B cell (primary cell): ENCODE measurements at regions of chr11 and their contacts with region 1.

Region 1: DNA sequence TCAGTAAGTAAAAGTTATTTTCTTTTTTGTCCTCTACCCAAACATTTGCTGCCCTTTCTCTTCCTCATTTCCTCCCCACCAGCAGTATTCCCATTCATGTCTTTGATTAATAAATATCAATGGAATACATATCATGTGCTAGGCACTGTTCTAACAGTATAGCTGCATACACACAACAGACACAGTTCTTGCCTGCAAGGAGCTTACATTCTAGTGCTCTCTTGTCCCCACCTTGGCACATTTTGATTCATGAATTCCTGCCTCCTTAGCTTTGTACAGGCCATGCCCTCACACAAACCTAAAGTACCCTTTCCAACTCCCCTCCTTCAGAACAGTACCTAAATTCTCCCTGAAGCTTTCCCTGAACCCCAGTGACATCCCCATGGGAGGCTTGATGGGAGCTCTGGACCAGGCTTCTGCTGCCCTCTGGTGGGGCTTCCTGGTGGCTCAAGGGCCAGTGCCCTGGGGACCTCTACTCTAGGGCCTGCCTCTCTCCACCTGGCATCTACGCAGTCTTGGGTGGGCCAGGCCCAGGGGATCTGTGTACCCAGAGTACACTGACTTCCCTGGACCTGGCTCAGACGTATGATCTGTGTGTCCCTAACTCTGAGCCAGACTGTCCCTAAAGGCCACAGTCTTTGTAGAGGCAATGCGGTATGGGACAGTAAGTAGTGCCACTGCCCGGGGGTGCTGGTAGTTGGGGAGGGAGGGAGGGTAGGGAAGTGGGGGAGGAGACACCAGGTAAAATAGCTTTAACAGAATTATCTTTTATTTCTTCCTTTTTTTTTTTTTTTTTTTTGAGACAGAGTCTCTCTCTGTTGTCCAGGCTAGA is 14.1 kb downstream of the RPS13 start:
- DNase-seq: peak; percentile 48
- ATAC-seq: peak; percentile 57
- H3K4me3 ChIP-seq: no peak overlapping the region
- H3K4me3 Mint-ChIP-seq: no peak overlapping the region
- H3K27ac ChIP-seq: no peak overlapping the region
- H3K27ac Mint-ChIP-seq: no peak overlapping the region
- H3K4me1 ChIP-seq: no peaks in the 10 kb centered on the region
- H3K4me1 Mint-ChIP-seq: no peaks in the 10 kb centered on the region
- H3K27me3 ChIP-seq: no peaks in the 10 kb centered on the region
- H3K27me3 Mint-ChIP-seq: no peaks in the 10 kb centered on the region
- CTCF ChIP-seq: peak; percentile 28

Region 2: DNA sequence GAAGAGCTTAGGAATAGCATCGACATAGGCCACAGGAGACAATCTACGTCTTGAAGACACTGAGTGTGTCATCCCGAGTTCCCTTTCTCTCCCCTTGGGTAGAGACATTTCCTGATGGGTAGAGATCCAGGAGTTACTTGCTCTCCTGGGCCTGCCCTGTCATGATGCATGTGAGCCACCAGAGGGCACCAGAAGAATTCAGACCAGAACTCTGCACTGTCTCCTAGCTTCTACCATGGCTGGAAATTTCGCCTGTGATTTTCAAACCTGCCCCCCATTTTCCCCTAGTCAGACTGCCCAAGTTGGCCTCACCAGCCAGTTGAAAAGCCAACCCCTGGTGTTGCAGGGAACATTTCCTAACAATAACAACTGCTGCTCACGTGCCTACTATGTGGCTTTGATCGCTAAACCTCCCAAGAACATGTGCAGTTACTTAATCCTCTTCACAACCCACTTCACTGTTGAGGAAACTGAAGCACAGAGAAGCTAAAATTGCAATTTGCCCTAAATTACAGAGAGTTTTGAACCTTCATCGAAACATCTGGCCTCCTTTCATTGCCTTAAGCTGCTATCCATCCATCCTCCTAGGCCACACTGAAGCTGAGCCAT is 277.8 kb before region 1 on chr11:
- CTCF ChIA-PET with region 1: interaction called, 41 read pairs
- POLR2A ChIA-PET with region 1: no interaction called
- intact Hi-C with region 1: loop called (anchors 1 kb)
- DNase-seq: peak; percentile 65
- ATAC-seq: peak; percentile 81
- H3K4me3 ChIP-seq: no peak overlapping the region
- H3K4me3 Mint-ChIP-seq: no peak overlapping the region
- H3K27ac ChIP-seq: no peak overlapping the region
- H3K27ac Mint-ChIP-seq: no peak overlapping the region
- H3K4me1 ChIP-seq: no peaks in the 10 kb centered on the region
- H3K4me1 Mint-ChIP-seq: no peaks in the 10 kb centered on the region
- H3K27me3 ChIP-seq: no peaks in the 10 kb centered on the region
- H3K27me3 Mint-ChIP-seq: no peaks in the 10 kb centered on the region
- CTCF ChIP-seq: peak; percentile 89

Region 3: DNA sequence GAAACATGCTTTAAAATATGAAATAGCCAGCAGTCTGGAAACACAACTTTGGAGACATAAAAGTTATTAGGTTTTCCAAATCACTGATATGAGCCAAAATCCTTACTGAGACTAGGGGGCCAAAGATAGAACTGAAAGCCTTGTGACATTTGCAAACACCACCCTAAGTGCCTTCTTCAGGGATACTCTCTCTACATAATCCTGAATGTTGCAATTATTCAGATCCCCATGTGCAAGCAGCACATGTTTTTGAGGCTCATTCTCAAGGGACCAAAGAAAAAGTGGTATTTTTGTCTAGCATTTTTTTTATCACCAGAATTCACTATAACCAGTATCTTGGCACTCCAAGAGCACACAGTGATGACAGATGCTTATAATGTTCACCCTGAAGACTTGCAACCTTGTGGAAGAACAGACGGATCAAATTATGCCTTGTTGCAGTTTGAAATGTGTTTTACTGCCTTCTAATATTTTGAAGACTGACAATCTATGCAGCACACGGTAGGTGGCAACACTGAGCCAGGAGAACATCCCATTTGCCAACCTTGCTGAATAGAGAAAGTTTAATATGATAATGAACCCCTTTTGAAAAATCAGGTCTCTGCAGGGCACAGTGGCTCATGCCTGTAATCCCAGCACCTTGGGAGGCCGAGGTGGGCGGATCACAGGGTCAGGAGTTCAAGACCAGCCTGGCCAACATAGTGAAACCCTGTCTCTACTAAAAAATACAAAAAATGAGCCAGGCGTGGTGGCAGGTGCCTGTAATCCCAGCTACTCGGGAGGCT is 127.7 kb before region 1 on chr11:
- CTCF ChIA-PET with region 1: interaction called, 5 read pairs
- POLR2A ChIA-PET with region 1: no interaction called
- intact Hi-C with region 1: loop called (anchors 1 kb)
- DNase-seq: peak; percentile 23
- ATAC-seq: no peak
- H3K4me3 ChIP-seq: no peak overlapping the region
- H3K4me3 Mint-ChIP-seq: no peak overlapping the region
- H3K27ac ChIP-seq: no peak overlapping the region
- H3K27ac Mint-ChIP-seq: no peak overlapping the region
- H3K4me1 ChIP-seq: no peaks in the 10 kb centered on the region
- H3K4me1 Mint-ChIP-seq: no peaks in the 10 kb centered on the region
- H3K27me3 ChIP-seq: peaks cover 0 to 1% (median 0%) of the 10 kb centered on the region in 4 experiments
- H3K27me3 Mint-ChIP-seq: peaks cover 12% of the 10 kb centered on the region
- CTCF ChIP-seq: peak; percentile 49

Region 4: GRCh38 chr11:16945671-16946469 is 117.5 kb before region 1 on chr11:
- CTCF ChIA-PET with region 1: interaction called, 12 read pairs
- POLR2A ChIA-PET with region 1: no interaction called
- intact Hi-C with region 1: loop called (anchors 1 kb)
- DNase-seq: peak; percentile 51
- ATAC-seq: peak; percentile 69
- H3K4me3 ChIP-seq: peak overlapping the region in 3 of 5 experiments; percentile 4 to 28 (median 24)
- H3K4me3 Mint-ChIP-seq: peak overlapping the region; percentile 66
- H3K27ac ChIP-seq: peak overlapping the region; percentile 7 to 29
- H3K27ac Mint-ChIP-seq: peak overlapping the region; percentile 44
- H3K4me1 ChIP-seq: peaks cover 14 to 15% of the 10 kb centered on the region in 2 donors
- H3K4me1 Mint-ChIP-seq: peaks cover 17% of the 10 kb centered on the region
- H3K27me3 ChIP-seq: peaks cover 0 to 3% (median 0%) of the 10 kb centered on the region in 4 experiments
- H3K27me3 Mint-ChIP-seq: no peaks in the 10 kb centered on the region
- CTCF ChIP-seq: peak; percentile 27

Region 5: DNA sequence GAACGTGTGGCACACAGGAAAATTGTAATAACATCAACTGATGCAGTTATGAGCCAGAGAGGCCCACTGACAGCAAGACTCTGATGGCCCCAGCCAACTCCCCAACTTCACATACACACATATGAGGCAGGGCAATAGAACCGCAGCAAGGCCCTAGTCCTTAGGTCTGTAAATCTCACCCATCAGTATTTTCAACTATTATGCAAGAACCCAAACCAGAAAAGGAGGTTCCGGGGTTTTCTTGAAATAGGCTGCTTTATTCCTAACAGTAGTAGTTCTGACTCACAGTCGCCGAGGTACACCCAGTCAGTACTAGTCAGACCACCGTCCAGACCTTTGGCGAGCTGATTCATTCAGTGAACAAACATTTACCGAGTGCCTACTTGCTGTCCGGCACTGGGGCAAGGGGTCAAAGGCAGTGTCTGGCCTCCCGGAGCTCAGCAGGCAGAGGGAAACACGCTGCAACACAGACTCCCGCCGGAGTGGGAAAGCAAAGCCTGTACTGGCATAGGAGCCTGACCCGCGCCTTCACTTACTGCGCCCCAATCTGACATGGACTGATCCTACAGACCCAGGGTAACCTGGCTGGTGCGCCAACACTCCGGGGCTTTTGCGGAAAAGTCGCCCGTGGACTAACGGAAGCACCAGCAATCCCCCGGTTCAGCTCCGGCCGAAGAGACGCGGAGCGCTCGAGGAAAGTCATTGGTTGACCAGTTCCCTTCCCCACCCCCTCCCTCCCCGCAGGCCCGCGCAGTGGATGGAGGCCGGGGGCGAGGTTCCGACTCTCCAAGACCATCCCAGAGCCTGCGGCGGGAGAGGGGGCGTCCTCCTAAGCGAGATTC is 50.5 kb before region 1 on chr11:
- CTCF ChIA-PET with region 1: no interaction called
- POLR2A ChIA-PET with region 1: no interaction called
- intact Hi-C with region 1: no loop called
- DNase-seq: no peak
- ATAC-seq: no peak
- H3K4me3 ChIP-seq: peak overlapping the region in 4 of 5 experiments; percentile 21 to 60 (median 56)
- H3K4me3 Mint-ChIP-seq: no peak overlapping the region
- H3K27ac ChIP-seq: no peak overlapping the region
- H3K27ac Mint-ChIP-seq: no peak overlapping the region
- H3K4me1 ChIP-seq: peaks cover 11 to 15% of the 10 kb centered on the region in 2 donors
- H3K4me1 Mint-ChIP-seq: peaks cover 11% of the 10 kb centered on the region
- H3K27me3 ChIP-seq: peaks cover 0 to 26% (median 15%) of the 10 kb centered on the region in 4 experiments
- H3K27me3 Mint-ChIP-seq: peaks cover 13% of the 10 kb centered on the region
- CTCF ChIP-seq: no peak